ENCODE measurements at regions of chr14 and their contacts with region 1.

Region 1: GRCh38 chr14:98984719-98985041 is 287.3 kb downstream of the BCL11B start:
- DNase-seq: peak; percentile 27 to 76 (median 67)
- ATAC-seq: peak; percentile 96
- H3K4me3 ChIP-seq: peak overlapping the region; percentile 17
- H3K4me3 Mint-ChIP-seq: peak overlapping the region; percentile 51 to 86 (median 78)
- H3K27ac ChIP-seq: peak overlapping the region; percentile 56
- H3K27ac Mint-ChIP-seq: peak overlapping the region; percentile 74 to 97 (median 94)
- H3K4me1 ChIP-seq: peaks cover 29 to 32% of the 10 kb centered on the region in 2 donors
- H3K4me1 Mint-ChIP-seq: peaks cover 27 to 65% (median 48%) of the 10 kb centered on the region in 7 donors
- H3K27me3 ChIP-seq: no peaks in the 10 kb centered on the region
- H3K27me3 Mint-ChIP-seq: no peaks in the 10 kb centered on the region

Region 2: DNA sequence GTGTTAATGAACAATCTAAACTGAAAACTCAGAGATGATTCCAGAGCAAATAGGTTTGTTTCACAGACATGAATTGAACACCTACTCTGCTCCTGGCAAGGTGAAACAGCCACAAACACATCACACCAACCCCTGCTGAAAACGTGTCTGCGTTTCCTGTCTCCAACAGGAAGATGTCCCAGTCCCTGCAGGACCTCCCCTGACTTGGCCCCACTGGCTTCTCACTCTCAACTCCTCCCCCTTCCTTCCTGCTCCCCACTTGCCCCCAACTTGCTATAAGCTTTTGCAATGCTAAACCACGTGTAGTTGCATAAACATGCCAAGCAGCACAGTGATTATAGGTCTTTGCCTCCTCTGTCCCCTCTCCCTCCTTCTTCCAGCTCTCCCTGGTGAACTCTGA is 280.2 kb before region 1 on chr14:
- CTCF ChIA-PET with region 1: no interaction called
- POLR2A ChIA-PET with region 1: no interaction called
- intact Hi-C with region 1: no loop called
- DNase-seq: peak in 7 of 9 donors; percentile 26 to 62 (median 53)
- ATAC-seq: peak; percentile 79
- H3K4me3 ChIP-seq: no peak overlapping the region
- H3K4me3 Mint-ChIP-seq: peak overlapping the region; percentile 7 to 75 (median 46)
- H3K27ac ChIP-seq: no peak overlapping the region
- H3K27ac Mint-ChIP-seq: peak overlapping the region in 8 of 9 donors; percentile 1 to 78 (median 53)
- H3K4me1 ChIP-seq: peaks cover 17 to 27% of the 10 kb centered on the region in 2 donors
- H3K4me1 Mint-ChIP-seq: peaks cover 17 to 63% (median 35%) of the 10 kb centered on the region in 7 donors
- H3K27me3 ChIP-seq: no peaks in the 10 kb centered on the region
- H3K27me3 Mint-ChIP-seq: peaks cover 0 to 2% (median 0%) of the 10 kb centered on the region in 5 donors

Region 3: DNA sequence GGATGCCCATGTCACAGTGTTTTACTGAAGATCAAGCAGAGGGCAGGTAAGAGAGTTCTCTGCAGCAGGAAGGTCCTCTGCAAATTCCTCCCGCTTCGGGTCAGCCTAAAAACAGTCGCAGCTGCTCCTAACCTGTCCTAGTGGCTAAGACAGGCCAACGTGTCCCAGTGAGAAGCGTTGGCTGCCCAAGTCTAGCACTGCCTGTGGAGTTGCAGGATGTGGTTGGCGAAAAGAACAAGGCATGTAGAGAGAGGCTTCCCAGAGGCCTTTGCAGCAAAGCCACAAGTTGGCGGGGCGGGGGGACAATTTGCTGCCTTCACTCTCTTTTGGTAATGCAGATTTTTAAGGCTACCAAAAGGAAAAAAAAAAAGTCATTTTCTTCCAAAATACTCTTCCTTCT is 52.8 kb before region 1 on chr14:
- CTCF ChIA-PET with region 1: no interaction called
- POLR2A ChIA-PET with region 1: interaction called, 21 read pairs
- intact Hi-C with region 1: loop called (anchors 2 to 5 kb)
- DNase-seq: peak; percentile 31 to 90 (median 88)
- ATAC-seq: peak; percentile 97
- H3K4me3 ChIP-seq: peak overlapping the region; percentile 40
- H3K4me3 Mint-ChIP-seq: peak overlapping the region; percentile 66 to 92 (median 80)
- H3K27ac ChIP-seq: peak overlapping the region; percentile 66
- H3K27ac Mint-ChIP-seq: peak overlapping the region; percentile 82 to 98 (median 94)
- H3K4me1 ChIP-seq: peaks cover 31 to 76% of the 10 kb centered on the region in 2 donors
- H3K4me1 Mint-ChIP-seq: peaks cover 51 to 100% (median 99%) of the 10 kb centered on the region in 7 donors
- H3K27me3 ChIP-seq: no peaks in the 10 kb centered on the region
- H3K27me3 Mint-ChIP-seq: peaks cover 0 to 2% (median 0%) of the 10 kb centered on the region in 5 donors

Region 4: GRCh38 chr14:98940693-98941437 is 43.8 kb before region 1 on chr14:
- CTCF ChIA-PET with region 1: no interaction called
- POLR2A ChIA-PET with region 1: no interaction called
- intact Hi-C with region 1: loop called in 1 of 2 experiments (anchors 2 kb)
- DNase-seq: no peak
- ATAC-seq: no peak
- H3K4me3 ChIP-seq: no peak overlapping the region
- H3K4me3 Mint-ChIP-seq: peak overlapping the region in 1 of 10 donors; percentile 36
- H3K27ac ChIP-seq: no peak overlapping the region
- H3K27ac Mint-ChIP-seq: peak overlapping the region in 1 of 9 donors; percentile 18
- H3K4me1 ChIP-seq: peaks cover 0 to 40% of the 10 kb centered on the region in 2 donors
- H3K4me1 Mint-ChIP-seq: peaks cover 22 to 76% (median 65%) of the 10 kb centered on the region in 7 donors
- H3K27me3 ChIP-seq: no peaks in the 10 kb centered on the region
- H3K27me3 Mint-ChIP-seq: peaks cover 0 to 4% (median 0%) of the 10 kb centered on the region in 5 donors

Measured in naive thymus-derived CD4-positive, alpha-beta T cell (primary cell).